GM10248 (cell line): ENCODE measurements at regions of chr3 and their contacts with region 1.

Region 1: DNA sequence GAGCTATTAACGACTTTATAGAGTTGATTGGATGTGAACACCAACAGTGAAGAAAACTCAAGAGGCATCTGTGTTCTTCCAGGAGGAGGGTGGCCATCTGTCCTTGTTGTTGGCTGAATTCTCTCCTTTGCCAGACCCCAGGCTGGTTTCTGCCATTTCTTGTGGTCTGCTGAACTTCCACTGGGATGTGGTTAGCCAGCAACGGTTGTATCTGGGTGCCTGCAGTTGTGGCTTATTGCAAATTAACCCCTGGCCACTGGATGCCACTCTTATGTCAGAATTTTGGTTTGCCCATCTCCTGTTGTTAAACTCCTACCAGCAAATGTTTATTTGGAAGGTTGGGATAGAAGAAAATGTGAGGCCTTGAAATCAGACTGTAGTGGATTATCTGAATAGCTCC is 163.6 kb upstream of the TBC1D5 start:
- DNase-seq: no peak
- CTCF ChIP-seq: no peak

Region 2: DNA sequence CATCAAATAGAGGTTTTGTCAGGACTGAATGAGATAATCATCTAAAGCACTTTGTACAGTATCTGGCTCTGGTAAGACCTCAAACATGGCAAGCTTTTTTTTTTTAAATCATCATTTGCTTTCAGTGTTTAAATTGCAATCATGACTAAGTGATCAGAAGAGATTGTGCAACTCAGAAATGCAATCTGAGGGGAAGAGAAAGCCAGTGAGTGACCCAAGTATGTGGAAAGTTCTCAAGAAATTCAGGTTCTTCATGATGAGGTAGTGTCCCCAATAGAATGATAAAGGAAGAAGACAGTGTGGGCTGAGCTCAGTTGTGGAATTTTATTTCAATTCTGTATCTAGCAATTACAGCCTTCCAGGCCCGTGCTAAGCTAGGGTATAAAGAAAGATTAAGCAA is 31.4 kb before region 1 on chr3:
- CTCF ChIA-PET with region 1: no interaction called
- POLR2A ChIA-PET with region 1: no interaction called
- DNase-seq: no peak
- CTCF ChIP-seq: no peak

Region 3: GRCh38 chr3:17894434-17895060 is 11.4 kb before region 1 on chr3:
- CTCF ChIA-PET with region 1: interaction called, 10 read pairs
- POLR2A ChIA-PET with region 1: no interaction called
- DNase-seq: no peak
- CTCF ChIP-seq: peak; percentile 46

Region 4: GRCh38 chr3:17954801-17955200 is 48.8 kb after region 1 on chr3:
- CTCF ChIA-PET with region 1: no interaction called
- POLR2A ChIA-PET with region 1: no interaction called
- DNase-seq: no peak
- CTCF ChIP-seq: no peak